A673 (cell line): ENCODE measurements at regions of chr3 and their contacts with region 1.

Region 1: GRCh38 chr3:126389112-126389793 is 5.5 kb upstream of the CFAP100 start:
- DNase-seq: peak; percentile 80
- H3K4me3 ChIP-seq: no peak overlapping the region
- H3K27ac ChIP-seq: peak overlapping the region; percentile 80
- H3K4me1 ChIP-seq: peaks cover 11% of the 10 kb centered on the region
- H3K27me3 ChIP-seq: no peaks in the 10 kb centered on the region
- CTCF ChIP-seq: peak; percentile 85

Region 2: DNA sequence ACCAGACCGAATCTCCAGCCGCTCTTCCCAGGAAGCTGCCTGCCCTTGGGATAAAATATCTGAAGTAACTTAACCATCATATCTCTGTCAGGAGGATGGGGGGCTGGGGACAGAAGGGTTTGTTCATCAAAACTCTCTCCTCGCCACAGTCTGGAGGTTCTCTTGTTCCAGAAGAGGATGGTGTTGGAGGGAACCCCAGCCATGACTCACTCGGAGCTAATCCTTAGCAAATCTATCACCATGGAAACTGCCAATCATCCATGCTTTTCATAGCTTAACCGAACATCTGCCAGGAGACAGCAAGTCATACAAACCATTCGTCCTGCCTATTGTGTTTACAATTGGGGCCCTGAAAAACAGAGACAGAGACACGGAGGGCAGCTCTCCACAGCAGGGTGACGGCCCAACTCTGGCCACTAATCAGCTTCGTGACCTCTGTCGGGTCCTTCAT is 1259.7 kb before region 1 on chr3:
- CTCF ChIA-PET with region 1: no interaction called
- POLR2A ChIA-PET with region 1: no interaction called
- intact Hi-C with region 1: no loop called
- DNase-seq: peak; percentile 94
- H3K4me3 ChIP-seq: no peak overlapping the region
- H3K27ac ChIP-seq: peak overlapping the region; percentile 55
- H3K4me1 ChIP-seq: peaks cover 30% of the 10 kb centered on the region
- H3K27me3 ChIP-seq: no peaks in the 10 kb centered on the region
- CTCF ChIP-seq: no peak

Region 3: GRCh38 chr3:126197854-126198584 is 191.2 kb before region 1 on chr3:
- CTCF ChIA-PET with region 1: no interaction called
- POLR2A ChIA-PET with region 1: no interaction called
- intact Hi-C with region 1: loop called (anchors 2 kb)
- DNase-seq: peak; percentile 91
- H3K4me3 ChIP-seq: no peak overlapping the region
- H3K27ac ChIP-seq: peak overlapping the region; percentile 8
- H3K4me1 ChIP-seq: peaks cover 37% of the 10 kb centered on the region
- H3K27me3 ChIP-seq: no peaks in the 10 kb centered on the region
- CTCF ChIP-seq: peak; percentile 91

Region 4: DNA sequence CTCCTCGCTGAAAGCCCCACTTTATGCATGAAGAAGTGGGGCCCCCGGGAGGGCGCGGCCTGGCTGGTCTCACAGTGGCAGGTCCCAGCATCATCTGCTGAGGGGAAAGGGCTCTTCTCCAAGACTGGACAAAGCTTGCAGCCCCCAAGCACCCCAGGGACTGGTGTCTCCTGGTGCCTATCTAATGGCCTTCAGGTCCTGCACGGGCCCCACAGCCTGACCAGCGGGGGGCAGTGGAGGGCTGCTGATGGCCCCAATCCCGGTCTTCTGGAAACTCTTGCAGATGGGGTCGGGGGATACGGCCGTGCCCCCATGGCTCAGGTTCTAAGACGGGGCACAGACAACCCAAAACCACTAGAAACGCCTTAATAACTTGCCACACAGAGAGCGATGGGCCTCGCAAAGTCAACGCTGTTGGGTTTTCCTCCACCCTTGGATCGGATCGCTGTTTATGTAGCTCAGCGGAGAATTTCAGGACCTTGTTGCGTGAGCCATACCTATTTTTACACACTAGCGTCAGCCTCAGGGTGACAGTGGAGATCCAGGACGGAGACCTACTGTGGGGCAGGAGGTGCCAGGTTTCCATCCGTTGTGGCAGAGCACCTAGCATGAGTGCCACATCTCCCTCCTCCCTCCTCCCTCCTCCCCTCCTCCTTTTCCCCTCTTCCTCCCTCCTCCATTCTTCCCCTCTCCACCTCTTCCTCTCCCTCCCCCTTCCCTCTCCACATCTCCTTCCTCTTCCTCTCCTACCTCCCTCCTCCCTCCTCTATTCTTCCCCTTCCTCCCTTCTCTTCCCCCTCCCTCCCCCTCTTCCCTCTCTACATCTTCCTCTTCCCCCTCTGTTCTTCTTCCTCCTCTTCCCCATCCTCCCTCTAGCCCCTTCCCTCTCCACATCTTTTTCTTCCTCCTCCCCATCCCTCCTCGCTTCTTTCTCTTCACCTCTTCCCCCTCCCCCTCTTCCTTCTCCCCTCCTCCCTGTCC is 129.6 kb before region 1 on chr3:
- CTCF ChIA-PET with region 1: interaction called, 3 read pairs
- POLR2A ChIA-PET with region 1: no interaction called
- intact Hi-C with region 1: loop called (anchors 2 kb)
- DNase-seq: peak; percentile 76
- H3K4me3 ChIP-seq: no peak overlapping the region
- H3K27ac ChIP-seq: peak overlapping the region; percentile 94
- H3K4me1 ChIP-seq: peaks cover 47% of the 10 kb centered on the region
- H3K27me3 ChIP-seq: no peaks in the 10 kb centered on the region
- CTCF ChIP-seq: peak; percentile 82